ENCODE measurements at regions of chr14 and their contacts with region 1.

Region 1: GRCh38 chr14:50231475-50232275 is at the start of gene SOS2:
- DNase-seq: peak; percentile 43
- ATAC-seq: peak; percentile 91
- H3K4me3 ChIP-seq: peak within 1 kb of the TSS; percentile 75
- H3K27ac ChIP-seq: peak within 1 kb of the TSS; percentile 73
- H3K4me1 ChIP-seq: no peaks in the 10 kb centered on the region; the same call in 1 of the 2 replicates
- H3K27me3 ChIP-seq: no peaks in the 10 kb centered on the region
- CTCF ChIP-seq: no peak
- EP300 ChIP-seq: no peak
- POLR2A ChIP-seq: peak; percentile 88
- RAD21 ChIP-seq: no peak
- polyA plus RNA-seq, gene SOS2: 2.9 to 4.1 TPM

Region 2: GRCh38 chr14:50210074-50210473 is 21.6 kb before region 1 on chr14:
- CTCF ChIA-PET with region 1: interaction called, 3 read pairs
- POLR2A ChIA-PET with region 1: interaction called, 13 read pairs
- RAD21 ChIA-PET with region 1: no interaction called
- SMC1A ChIA-PET with region 1: interaction called, 4 read pairs
- in situ Hi-C with region 1: no loop called
- intact Hi-C with region 1: no loop called
- DNase-seq: no peak
- ATAC-seq: no peak
- H3K4me3 ChIP-seq: no peak overlapping the region
- H3K27ac ChIP-seq: no peak overlapping the region
- H3K4me1 ChIP-seq: no peaks in the 10 kb centered on the region
- H3K27me3 ChIP-seq: no peaks in the 10 kb centered on the region
- CTCF ChIP-seq: no peak
- EP300 ChIP-seq: no peak
- POLR2A ChIP-seq: no peak
- RAD21 ChIP-seq: no peak

Region 3: GRCh38 chr14:50532502-50533240 is 301.0 kb after region 1 on chr14 and contains the start of gene MAP4K5:
- CTCF ChIA-PET with region 1: no interaction called
- POLR2A ChIA-PET with region 1: no interaction called
- RAD21 ChIA-PET with region 1: no interaction called
- SMC1A ChIA-PET with region 1: interaction called, 3 read pairs
- in situ Hi-C with region 1: no loop called
- intact Hi-C with region 1: loop called (anchors 5 kb)
- DNase-seq: peak; percentile 40
- ATAC-seq: peak; percentile 91
- H3K4me3 ChIP-seq: peak within 1 kb of the TSS; percentile 81
- H3K27ac ChIP-seq: peak within 1 kb of the TSS; percentile 75
- H3K4me1 ChIP-seq: peaks cover 10% of the 10 kb centered on the region
- H3K27me3 ChIP-seq: no peaks in the 10 kb centered on the region
- CTCF ChIP-seq: peak; percentile 89 to 99 (median 92); a peak in 5 of 6 replicates
- EP300 ChIP-seq: 0 out of 4 replicates have a peak, but pooled peaks of 1 of the 2 experiments have one; percentile 16
- POLR2A ChIP-seq: no peak; the same call in 1 of the 2 replicates
- RAD21 ChIP-seq: peak; percentile 96
- polyA plus RNA-seq, gene MAP4K5: 9.1 to 12.0 TPM